Lower leg skin (tissue), 4 donors: ENCODE measurements at regions of chr6 and their contacts with region 1.

Region 1: DNA sequence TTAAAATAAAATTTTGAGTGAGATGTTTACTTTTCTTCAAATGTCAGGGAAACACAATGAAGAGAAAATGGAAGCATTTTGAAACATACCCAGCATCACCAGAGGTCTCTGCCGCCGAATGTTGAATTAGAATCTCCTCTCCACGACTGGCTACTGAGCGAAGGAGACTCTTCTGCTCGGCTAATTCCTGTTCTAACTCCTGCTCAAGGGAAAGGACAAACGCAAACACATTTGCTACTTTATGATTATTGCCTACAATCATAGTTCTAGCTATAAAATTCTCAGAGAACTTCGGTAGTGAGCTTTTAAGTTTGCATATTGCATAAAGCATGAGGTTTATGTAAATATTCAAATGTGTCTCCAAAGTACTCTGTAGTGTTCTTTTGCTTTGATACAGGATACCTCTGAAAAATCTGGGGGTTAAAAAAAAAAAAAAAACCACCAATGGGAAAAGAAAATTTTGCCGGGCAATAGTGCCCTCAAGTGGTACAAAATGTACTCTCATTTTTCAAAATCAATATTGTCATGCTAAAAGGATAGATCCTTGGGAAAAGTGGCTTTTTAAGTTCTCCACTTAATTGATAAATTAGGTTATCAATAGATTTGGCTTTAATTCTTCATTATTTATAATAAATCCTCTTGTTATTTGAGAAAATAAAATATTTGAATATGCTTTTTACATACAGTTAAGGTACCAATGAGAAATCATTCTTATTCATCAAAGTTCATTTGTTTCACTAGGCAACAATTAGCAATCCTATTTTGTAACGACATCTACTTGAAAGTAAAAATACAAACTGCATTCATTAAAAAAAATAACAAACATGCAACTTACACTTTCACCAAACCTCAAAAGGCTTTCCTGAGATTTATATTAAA is 369.0 kb downstream of the SYNE1 start:
- DNase-seq: no peak
- H3K4me3 ChIP-seq: no peak overlapping the region
- CTCF ChIP-seq: no peak
- POLR2A ChIP-seq: no peak

Region 2: GRCh38 chr6:151566557-151566956 is 701.6 kb before region 1 on chr6:
- intact Hi-C with region 1: no loop called
- DNase-seq: no peak
- H3K4me3 ChIP-seq: no peak overlapping the region
- CTCF ChIP-seq: no peak
- POLR2A ChIP-seq: no peak

Region 3: GRCh38 chr6:151681433-151682059 is 586.7 kb before region 1 on chr6:
- intact Hi-C with region 1: loop called (anchors 10 kb)
- DNase-seq: no peak
- H3K4me3 ChIP-seq: no peak overlapping the region
- CTCF ChIP-seq: no peak
- POLR2A ChIP-seq: no peak